ENCODE measurements at regions of chr3 and their contacts with region 1.

Region 1: DNA sequence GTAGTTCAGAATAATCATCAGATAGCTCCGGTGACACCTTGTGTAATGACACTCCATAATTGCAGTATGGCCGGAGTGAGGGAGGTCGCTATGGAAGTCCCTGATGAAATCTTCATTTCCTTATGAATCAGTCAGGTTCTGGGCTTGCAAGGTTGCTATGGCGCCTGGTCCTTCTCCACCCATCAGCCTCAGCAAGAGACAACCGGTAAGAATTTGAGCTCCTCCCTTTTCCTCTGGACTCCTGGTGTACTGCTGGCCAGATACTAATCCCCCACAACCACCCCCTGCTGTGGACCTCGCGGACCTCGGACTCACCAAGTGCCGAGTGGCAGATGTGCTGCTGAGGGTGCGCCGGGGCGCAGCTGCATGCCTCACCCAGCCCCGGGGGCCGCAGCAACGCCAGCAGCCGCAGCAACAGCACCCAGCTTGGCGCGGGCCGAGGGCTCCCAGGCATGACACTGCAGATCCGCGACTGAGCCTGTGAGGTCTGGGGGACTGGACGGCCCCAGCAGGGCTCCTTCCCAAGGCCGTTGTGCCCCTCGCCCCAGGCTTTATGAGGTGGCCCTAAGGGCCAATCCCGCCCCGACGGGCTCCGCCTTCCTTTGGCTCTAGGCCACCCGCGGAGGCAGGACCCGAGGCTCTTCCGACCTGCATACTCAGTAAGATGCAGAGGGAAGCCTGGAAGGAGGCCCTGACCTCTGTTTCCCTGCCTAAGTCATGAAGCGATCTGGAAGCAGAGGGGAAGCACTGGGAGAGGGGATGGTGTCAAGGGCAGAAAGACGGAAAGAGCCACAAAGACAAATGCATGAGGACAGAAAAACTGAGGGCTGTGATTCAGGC is at the start of gene TIMP4:
- DNase-seq: no peak
- H3K4me3 ChIP-seq: peak within 1 kb of the TSS; percentile 46 to 67 (median 49)
- H3K27ac ChIP-seq: peak within 1 kb of the TSS; percentile 36 to 72
- H3K4me1 ChIP-seq: no peaks in the 10 kb centered on the region
- H3K27me3 ChIP-seq: no peaks in the 10 kb centered on the region
- CTCF ChIP-seq: no peak
- POLR2A ChIP-seq: no peak
- total RNA-seq, gene TIMP4: 27.4 to 170 (median 46.9) TPM

Region 2: DNA sequence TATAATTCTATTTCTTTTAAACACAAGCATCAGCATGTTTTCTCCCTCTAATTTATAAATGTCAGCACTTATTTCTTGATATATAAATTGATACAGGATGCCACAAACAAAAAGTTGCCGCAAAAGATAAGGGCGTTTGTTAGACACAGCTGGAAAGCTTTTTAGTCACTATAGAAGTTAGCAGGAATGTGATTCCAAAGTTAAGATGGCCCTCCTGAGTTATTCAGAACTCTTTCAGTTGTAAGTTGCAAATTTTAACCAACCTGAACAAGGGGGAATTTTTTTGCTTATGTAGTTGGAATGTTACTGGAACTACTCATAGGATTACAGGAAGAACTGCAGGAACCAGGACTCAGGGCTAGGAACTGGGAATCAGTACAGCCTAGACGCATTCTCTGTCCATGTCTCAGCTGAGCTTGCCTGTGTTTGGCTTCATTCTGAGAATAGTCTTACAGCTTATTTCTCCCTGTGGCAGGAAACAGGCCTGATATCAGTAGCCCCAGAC is 681.1 kb before region 1 on chr3:
- intact Hi-C with region 1: no loop called
- DNase-seq: no peak
- H3K4me3 ChIP-seq: no peak overlapping the region
- H3K27ac ChIP-seq: peak overlapping the region; percentile 61 to 70
- H3K4me1 ChIP-seq: peaks cover 0 to 23% of the 10 kb centered on the region in 2 donors
- H3K27me3 ChIP-seq: no peaks in the 10 kb centered on the region
- CTCF ChIP-seq: no peak
- POLR2A ChIP-seq: no peak

Region 3: DNA sequence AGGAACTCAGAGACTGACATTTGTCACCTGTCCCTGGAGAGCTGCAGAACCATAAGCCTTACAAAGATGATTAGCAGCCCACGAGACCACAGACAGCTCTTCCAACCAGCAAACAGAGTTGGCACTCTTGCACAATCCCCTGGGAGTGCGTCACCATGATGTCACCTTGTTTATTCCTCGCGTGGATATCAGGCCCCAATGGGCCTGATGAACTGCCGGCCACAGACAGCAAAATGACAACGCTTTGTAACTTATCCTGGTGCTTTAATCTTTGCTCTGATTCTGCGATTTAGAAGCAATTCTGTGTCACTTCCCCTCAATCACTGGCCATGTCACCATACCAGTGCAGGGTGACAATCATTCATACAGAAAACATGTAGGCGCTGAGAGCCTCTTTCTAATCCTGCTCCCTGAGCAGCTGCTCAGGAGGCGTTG is 401.1 kb before region 1 on chr3:
- intact Hi-C with region 1: loop called (anchors 5 kb)
- DNase-seq: no peak
- H3K4me3 ChIP-seq: no peak overlapping the region
- H3K27ac ChIP-seq: no peak overlapping the region
- H3K4me1 ChIP-seq: no peaks in the 10 kb centered on the region
- H3K27me3 ChIP-seq: no peaks in the 10 kb centered on the region
- CTCF ChIP-seq: no peak
- POLR2A ChIP-seq: no peak

Region 4: DNA sequence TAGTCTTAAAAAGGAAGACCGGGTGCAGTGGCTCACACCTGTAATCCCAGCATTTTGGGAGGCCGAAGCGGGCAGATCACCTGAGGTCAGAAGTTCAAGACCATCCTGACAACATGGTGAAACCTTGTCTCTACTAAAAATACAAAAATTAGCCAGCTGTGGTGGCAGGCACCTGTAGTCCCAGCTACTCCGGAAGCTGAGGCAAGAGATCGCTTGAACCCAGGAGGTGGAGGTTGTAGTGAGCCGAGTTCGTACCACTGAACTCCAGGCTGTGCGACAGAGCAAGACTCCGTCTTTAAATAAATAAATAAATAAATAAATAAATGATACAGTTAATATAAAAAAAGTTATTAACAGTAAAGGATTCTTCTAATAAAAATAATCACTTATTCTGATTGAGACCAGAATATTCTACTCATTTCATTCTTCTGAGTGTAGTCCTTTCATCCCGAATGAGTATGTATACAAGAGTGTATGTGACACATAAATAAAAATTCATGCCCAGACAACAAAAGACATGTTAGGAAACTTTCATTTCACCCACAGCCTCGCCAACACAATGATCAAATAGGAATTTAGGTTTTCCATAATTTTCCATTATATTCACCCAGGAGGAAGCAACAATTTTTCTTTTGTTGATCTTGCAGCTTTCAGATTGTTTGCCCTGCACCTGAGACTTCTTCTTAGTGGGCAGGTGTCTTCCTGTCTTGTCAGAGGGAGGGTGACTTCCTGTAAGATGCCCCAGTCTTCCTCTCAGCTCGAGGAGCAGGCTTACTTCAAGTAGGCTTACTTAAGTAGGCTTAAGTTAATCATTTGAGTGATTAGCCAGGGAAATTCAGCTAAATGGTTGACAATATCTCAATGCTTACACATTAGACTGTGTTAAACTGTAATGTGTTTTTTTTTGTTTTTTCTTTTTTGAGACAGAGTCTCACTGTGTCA is 1269.3 kb after region 1 on chr3:
- intact Hi-C with region 1: no loop called
- DNase-seq: no peak
- H3K4me3 ChIP-seq: no peak overlapping the region
- H3K27ac ChIP-seq: no peak overlapping the region
- H3K4me1 ChIP-seq: no peaks in the 10 kb centered on the region
- H3K27me3 ChIP-seq: no peaks in the 10 kb centered on the region
- CTCF ChIP-seq: no peak
- POLR2A ChIP-seq: no peak